CD4-positive, alpha-beta memory T cell (primary cell): ENCODE measurements at regions of chr9 and their contacts with region 1.

Region 1: DNA sequence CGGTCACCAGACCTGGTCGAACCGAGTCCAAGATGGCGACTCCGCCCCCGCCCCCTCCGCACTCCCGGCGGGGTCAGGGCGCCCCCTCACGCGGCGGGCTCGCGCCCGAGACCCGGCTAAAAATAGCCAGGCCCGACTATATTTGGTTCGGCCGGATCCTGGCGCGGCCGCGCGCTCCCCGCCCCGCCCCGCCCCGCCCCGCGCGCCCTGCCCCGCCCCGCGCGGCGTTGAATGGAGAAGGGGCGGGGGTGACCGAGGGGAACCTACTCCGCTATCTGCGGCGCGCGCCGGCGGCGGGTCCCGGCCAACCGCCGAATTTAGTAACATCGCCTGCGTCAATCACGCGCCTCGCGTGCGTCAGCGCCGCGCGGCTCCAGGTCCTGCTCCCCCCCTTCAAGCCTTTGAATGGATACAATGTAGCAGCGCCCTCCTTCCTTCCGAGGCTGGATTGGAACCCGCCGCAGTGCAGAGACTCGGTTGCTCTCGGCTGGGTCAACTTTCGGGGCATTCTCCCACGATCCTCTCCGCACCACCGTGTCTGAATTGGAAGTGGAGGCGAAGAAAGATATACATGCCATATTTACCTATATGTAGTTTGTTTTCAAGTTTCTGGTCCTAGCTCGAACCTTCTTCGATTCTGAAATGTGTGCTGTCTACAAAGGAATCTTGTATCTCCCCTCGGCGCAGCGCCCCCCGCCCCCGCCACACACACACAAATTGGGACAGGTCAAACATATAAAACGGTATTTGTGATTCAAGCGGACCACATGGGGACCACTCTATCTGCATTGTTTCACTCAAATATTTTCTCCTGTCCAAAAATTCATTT is 1.6 kb upstream of the NR4A3 start:
- DNase-seq: peak; percentile 94 to 96 (median 95)
- H3K4me3 ChIP-seq: peak overlapping the region; percentile 82 to 83
- H3K4me3 Mint-ChIP-seq: peak overlapping the region; percentile 90 to 100 (median 97)
- H3K27ac ChIP-seq: peak overlapping the region; percentile 93
- H3K27ac Mint-ChIP-seq: peak overlapping the region; percentile 100
- H3K4me1 ChIP-seq: peaks cover 41% of the 10 kb centered on the region
- H3K4me1 Mint-ChIP-seq: peaks cover 29 to 67% (median 44%) of the 10 kb centered on the region in 4 donors
- H3K27me3 ChIP-seq: peaks cover 21% of the 10 kb centered on the region
- H3K27me3 Mint-ChIP-seq: peaks cover 22 to 29% of the 10 kb centered on the region in 2 donors

Region 2: GRCh38 chr9:98276907-98277469 is 1543.1 kb before region 1 on chr9:
- CTCF ChIA-PET with region 1: no interaction called
- POLR2A ChIA-PET with region 1: no interaction called
- intact Hi-C with region 1: loop called (anchors 5 kb)
- DNase-seq: no peak
- H3K4me3 ChIP-seq: no peak overlapping the region
- H3K4me3 Mint-ChIP-seq: no peak overlapping the region
- H3K27ac ChIP-seq: no peak overlapping the region
- H3K27ac Mint-ChIP-seq: no peak overlapping the region
- H3K4me1 ChIP-seq: no peaks in the 10 kb centered on the region
- H3K4me1 Mint-ChIP-seq: no peaks in the 10 kb centered on the region
- H3K27me3 ChIP-seq: no peaks in the 10 kb centered on the region
- H3K27me3 Mint-ChIP-seq: peaks cover 11 to 23% of the 10 kb centered on the region in 2 donors

Region 3: GRCh38 chr9:99221621-99222415 is 598.3 kb before region 1 on chr9 and contains the starts of genes ALG2 and SEC61B:
- CTCF ChIA-PET with region 1: no interaction called
- POLR2A ChIA-PET with region 1: interaction called, 3 read pairs
- intact Hi-C with region 1: loop called (anchors 1 kb)
- DNase-seq: peak; percentile 92 to 95 (median 93)
- H3K4me3 ChIP-seq: peak within 1 kb of the TSS; percentile 57 to 78
- H3K4me3 Mint-ChIP-seq: peak within 1 kb of the TSS; percentile 95 to 100 (median 98)
- H3K27ac ChIP-seq: peak within 1 kb of the TSS; percentile 82
- H3K27ac Mint-ChIP-seq: peak within 1 kb of the TSS; percentile 99 to 100 (median 100)
- H3K4me1 ChIP-seq: peaks cover 54% of the 10 kb centered on the region
- H3K4me1 Mint-ChIP-seq: peaks cover 51 to 93% (median 74%) of the 10 kb centered on the region in 4 donors
- H3K27me3 ChIP-seq: no peaks in the 10 kb centered on the region
- H3K27me3 Mint-ChIP-seq: no peaks in the 10 kb centered on the region
- total RNA-seq, gene ALG2: 39.1 to 39.8 TPM
- total RNA-seq, gene SEC61B: 101 to 106 TPM

Region 4: DNA sequence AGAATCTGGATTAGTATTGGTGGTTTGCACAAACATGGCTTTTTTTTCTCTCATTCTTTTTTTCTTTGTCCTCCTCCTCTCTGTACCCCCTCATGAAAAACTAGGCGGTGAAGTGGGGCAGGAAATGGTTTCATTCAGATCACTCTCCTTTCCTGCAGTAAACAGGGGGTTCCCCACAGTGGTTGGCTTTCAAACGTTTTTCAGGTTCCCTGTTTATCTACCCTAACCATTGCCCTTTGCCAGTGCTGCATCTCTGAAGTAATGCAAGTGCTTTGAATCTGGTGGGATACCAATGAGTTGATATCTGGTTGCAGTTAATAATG is 31.4 kb after region 1 on chr9:
- CTCF ChIA-PET with region 1: no interaction called
- POLR2A ChIA-PET with region 1: interaction called, 9 read pairs
- intact Hi-C with region 1: loop called (anchors 1 kb)
- DNase-seq: peak; percentile 55 to 77 (median 62)
- H3K4me3 ChIP-seq: peak overlapping the region in 1 of 2 donors; percentile 17
- H3K4me3 Mint-ChIP-seq: peak overlapping the region in 7 of 8 donors; percentile 25 to 72 (median 58)
- H3K27ac ChIP-seq: no peak overlapping the region
- H3K27ac Mint-ChIP-seq: peak overlapping the region; percentile 48 to 86 (median 78)
- H3K4me1 ChIP-seq: peaks cover 22% of the 10 kb centered on the region
- H3K4me1 Mint-ChIP-seq: peaks cover 23 to 45% (median 30%) of the 10 kb centered on the region in 4 donors
- H3K27me3 ChIP-seq: no peaks in the 10 kb centered on the region
- H3K27me3 Mint-ChIP-seq: no peaks in the 10 kb centered on the region

Region 5: GRCh38 chr9:100028201-100028784 is 208.2 kb after region 1 on chr9:
- CTCF ChIA-PET with region 1: interaction called, 4 read pairs
- POLR2A ChIA-PET with region 1: no interaction called
- intact Hi-C with region 1: loop called (anchors 5 kb)
- DNase-seq: peak; percentile 47 to 67 (median 58)
- H3K4me3 ChIP-seq: no peak overlapping the region
- H3K4me3 Mint-ChIP-seq: no peak overlapping the region
- H3K27ac ChIP-seq: no peak overlapping the region
- H3K27ac Mint-ChIP-seq: peak overlapping the region in 1 of 7 donors; percentile 57
- H3K4me1 ChIP-seq: no peaks in the 10 kb centered on the region
- H3K4me1 Mint-ChIP-seq: peaks cover 5 to 11% (median 7%) of the 10 kb centered on the region in 4 donors
- H3K27me3 ChIP-seq: no peaks in the 10 kb centered on the region
- H3K27me3 Mint-ChIP-seq: no peaks in the 10 kb centered on the region

Region 6: GRCh38 chr9:100411472-100412283 is 591.6 kb after region 1 on chr9:
- CTCF ChIA-PET with region 1: no interaction called
- POLR2A ChIA-PET with region 1: no interaction called
- intact Hi-C with region 1: loop called (anchors 5 kb)
- DNase-seq: peak; percentile 80 to 88 (median 81)
- H3K4me3 ChIP-seq: peak overlapping the region; percentile 58 to 59
- H3K4me3 Mint-ChIP-seq: peak overlapping the region; percentile 86 to 94 (median 90)
- H3K27ac ChIP-seq: no peak overlapping the region
- H3K27ac Mint-ChIP-seq: peak overlapping the region; percentile 57 to 92 (median 85)
- H3K4me1 ChIP-seq: peaks cover 8% of the 10 kb centered on the region
- H3K4me1 Mint-ChIP-seq: peaks cover 9 to 14% (median 13%) of the 10 kb centered on the region in 4 donors
- H3K27me3 ChIP-seq: no peaks in the 10 kb centered on the region
- H3K27me3 Mint-ChIP-seq: peaks cover 5 to 20% of the 10 kb centered on the region in 2 donors

Region 7: GRCh38 chr9:100573655-100574260 is 753.7 kb after region 1 on chr9:
- CTCF ChIA-PET with region 1: no interaction called
- POLR2A ChIA-PET with region 1: no interaction called
- intact Hi-C with region 1: no loop called
- DNase-seq: no peak
- H3K4me3 ChIP-seq: no peak overlapping the region
- H3K4me3 Mint-ChIP-seq: no peak overlapping the region
- H3K27ac ChIP-seq: no peak overlapping the region
- H3K27ac Mint-ChIP-seq: no peak overlapping the region
- H3K4me1 ChIP-seq: no peaks in the 10 kb centered on the region
- H3K4me1 Mint-ChIP-seq: no peaks in the 10 kb centered on the region
- H3K27me3 ChIP-seq: no peaks in the 10 kb centered on the region
- H3K27me3 Mint-ChIP-seq: peaks cover 0 to 2% of the 10 kb centered on the region in 2 donors